Heart right ventricle (tissue), 16 donors: ENCODE measurements at regions of chr19 and their contacts with region 1.

Region 1: GRCh38 chr19:2543463-2544442 is 67.8 kb downstream of the GADD45B start:
- DNase-seq: peak; percentile 92 to 93
- ATAC-seq: peak; percentile 75 to 88 (median 82)
- H3K4me3 ChIP-seq: peak overlapping the region in 8 of 10 donors; percentile 8 to 40 (median 30)
- H3K27ac ChIP-seq: peak overlapping the region; percentile 83 to 97 (median 93)
- H3K4me1 ChIP-seq: peaks cover 35 to 80% (median 74%) of the 10 kb centered on the region in 9 donors
- H3K27me3 ChIP-seq: no peaks in the 10 kb centered on the region
- CTCF ChIP-seq: peak in 5 of 9 donors; percentile 9 to 63 (median 60)

Region 2: DNA sequence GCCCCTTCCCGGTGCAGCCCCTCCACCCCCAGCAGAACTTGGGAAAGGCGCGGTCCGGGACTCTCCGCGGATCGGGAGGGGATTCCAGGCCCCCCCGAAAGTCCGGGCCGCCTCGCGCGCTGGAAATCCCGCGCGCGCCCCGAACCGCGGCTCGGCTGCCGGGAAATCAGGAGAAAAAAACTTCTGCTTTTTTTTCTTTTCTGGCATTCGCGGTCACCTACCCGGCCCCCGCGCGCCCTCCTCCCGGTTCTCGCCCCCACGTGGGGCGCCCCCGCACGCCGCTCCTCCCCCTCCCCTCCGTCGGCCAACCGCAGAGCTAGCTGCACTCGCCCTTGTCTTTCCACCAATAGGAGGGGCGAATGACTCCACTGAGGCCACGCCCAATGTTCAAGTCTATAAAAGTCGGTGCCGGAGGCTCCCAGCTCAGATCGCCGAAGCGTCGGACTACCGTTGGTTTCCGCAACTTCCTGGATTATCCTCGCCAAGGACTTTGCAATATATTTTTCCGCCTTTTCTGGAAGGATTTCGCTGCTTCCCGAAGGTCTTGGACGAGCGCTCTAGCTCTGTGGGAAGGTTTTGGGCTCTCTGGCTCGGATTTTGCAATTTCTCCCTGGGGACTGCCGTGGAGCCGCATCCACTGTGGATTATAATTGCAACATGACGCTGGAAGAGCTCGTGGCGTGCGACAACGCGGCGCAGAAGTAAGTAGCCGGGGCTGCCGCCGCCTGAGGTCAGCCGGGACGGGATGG is 67.9 kb before region 1 on chr19 and contains the start of gene GADD45B:
- intact Hi-C with region 1: loop called in 9 of 10 experiments (anchors 1 to 10 kb)
- DNase-seq: peak; percentile 97 to 98
- ATAC-seq: peak; percentile 77 to 90 (median 86)
- H3K4me3 ChIP-seq: peak within 1 kb of the TSS; percentile 73 to 99 (median 87)
- H3K27ac ChIP-seq: peak within 1 kb of the TSS; percentile 75 to 98 (median 93)
- H3K4me1 ChIP-seq: peaks cover 9 to 50% (median 37%) of the 10 kb centered on the region in 9 donors
- H3K27me3 ChIP-seq: no peaks in the 10 kb centered on the region
- CTCF ChIP-seq: no peak
- total RNA-seq, gene GADD45B: 19.6 to 297 (median 31.3) TPM

Region 3: DNA sequence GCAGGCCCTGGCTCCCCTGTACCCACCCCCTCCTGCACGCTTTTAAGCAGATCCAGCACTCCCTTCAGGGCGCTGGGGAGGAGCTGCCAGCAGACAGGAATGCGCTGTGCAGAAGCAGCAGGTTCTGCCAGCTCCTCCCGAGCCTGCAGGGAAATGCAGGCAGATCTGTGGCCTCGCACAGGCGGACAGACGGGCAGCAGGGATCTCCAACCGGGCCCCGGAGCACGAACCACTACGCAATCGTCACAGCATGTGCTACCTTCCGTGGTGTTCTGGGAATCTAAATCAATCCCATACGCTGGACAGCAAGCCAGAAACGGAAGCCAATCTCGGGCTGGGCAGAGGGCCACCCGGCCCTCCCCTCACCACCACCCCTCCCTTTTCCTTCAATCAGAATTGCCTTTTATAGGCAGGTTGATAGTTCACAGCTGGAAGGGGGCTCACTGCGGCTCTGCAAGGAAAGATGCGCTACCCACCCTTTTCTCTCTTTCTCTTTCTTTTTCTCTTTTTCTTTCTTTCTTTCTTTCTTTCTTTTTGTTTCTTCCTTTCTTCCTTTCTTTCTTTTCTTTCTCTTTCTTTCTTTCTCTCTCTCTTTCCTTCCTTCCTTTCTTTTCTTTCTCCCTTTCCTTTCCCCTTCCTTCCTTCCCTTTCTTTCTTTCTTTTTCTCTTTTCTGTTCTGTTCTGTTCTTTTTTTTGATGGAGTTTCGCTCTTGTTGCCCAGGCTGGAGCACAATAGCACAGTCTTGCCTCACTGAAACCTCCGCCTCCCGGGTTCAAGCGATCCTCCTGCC is 58.8 kb after region 1 on chr19:
- intact Hi-C with region 1: loop called in 1 of 10 experiments (anchors 2 kb)
- DNase-seq: peak; percentile 78 to 83
- ATAC-seq: peak; percentile 77 to 94 (median 88)
- H3K4me3 ChIP-seq: peak overlapping the region in 8 of 10 donors; percentile 0 to 37 (median 26)
- H3K27ac ChIP-seq: peak overlapping the region; percentile 64 to 94 (median 88)
- H3K4me1 ChIP-seq: peaks cover 8 to 46% (median 30%) of the 10 kb centered on the region in 9 donors
- H3K27me3 ChIP-seq: no peaks in the 10 kb centered on the region
- CTCF ChIP-seq: no peak